ENCODE measurements at regions of chr15 and their contacts with region 1.

Region 1: DNA sequence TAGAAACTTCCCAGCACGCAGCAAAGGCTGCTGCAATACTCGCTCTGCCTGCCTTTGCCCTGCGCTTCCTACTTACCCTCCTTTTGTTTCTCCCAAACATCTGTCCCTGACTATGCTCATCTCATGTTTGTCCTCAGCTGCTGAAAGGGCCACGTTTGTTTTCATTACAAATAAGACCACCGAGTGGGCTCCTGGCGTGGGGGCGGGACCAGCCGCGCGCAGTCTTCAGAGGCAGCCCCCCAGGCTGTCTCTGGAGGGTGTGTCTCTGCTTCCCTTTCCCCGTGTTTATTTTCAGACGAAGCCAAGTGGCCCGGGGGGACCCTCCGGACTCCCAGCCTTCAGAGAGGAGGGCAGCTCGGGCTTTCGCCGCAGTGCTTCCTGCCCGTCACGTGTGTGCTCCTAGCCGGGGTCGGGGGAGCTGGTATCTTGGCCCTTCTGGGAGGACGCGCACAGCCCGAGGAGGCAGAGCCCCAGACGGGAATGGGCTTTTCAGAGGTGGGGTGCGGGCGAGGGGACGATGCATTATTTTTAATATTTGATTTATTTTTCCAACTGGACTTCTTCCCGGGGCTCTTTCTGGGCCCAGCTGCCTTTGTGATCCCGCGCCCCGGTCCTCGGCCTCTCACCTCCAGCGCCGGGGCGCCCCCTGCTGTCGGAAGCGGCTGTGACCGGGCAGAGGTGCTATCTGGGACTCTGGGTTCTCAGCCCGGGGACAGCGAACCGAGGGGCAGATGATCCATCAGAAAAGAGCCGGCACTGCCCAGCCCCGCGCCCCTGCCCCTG is 70.0 kb upstream of the CGNL1 start:
- DNase-seq: peak; percentile 95
- H3K4me3 ChIP-seq: peak overlapping the region; percentile 44 to 54
- H3K27ac ChIP-seq: no peak overlapping the region
- H3K4me1 ChIP-seq: peaks cover 0 to 2% of the 10 kb centered on the region in 2 experiments; a peak in 2 of 4 replicates
- H3K27me3 ChIP-seq: no peaks in the 10 kb centered on the region
- CTCF ChIP-seq: peak; percentile 85
- EP300 ChIP-seq: no peak
- RAD21 ChIP-seq: peak; percentile 83

Region 2: GRCh38 chr15:56496635-56497034 is 809.7 kb before region 1 on chr15:
- CTCF ChIA-PET with region 1: interaction called, 36 read pairs
- POLR2A ChIA-PET with region 1: interaction called, 5 read pairs
- DNase-seq: peak; percentile 56
- H3K4me3 ChIP-seq: no peak overlapping the region
- H3K27ac ChIP-seq: no peak overlapping the region
- H3K4me1 ChIP-seq: no peaks in the 10 kb centered on the region
- H3K27me3 ChIP-seq: no peaks in the 10 kb centered on the region
- CTCF ChIP-seq: peak; percentile 83
- EP300 ChIP-seq: no peak
- RAD21 ChIP-seq: peak; percentile 89

Region 3: DNA sequence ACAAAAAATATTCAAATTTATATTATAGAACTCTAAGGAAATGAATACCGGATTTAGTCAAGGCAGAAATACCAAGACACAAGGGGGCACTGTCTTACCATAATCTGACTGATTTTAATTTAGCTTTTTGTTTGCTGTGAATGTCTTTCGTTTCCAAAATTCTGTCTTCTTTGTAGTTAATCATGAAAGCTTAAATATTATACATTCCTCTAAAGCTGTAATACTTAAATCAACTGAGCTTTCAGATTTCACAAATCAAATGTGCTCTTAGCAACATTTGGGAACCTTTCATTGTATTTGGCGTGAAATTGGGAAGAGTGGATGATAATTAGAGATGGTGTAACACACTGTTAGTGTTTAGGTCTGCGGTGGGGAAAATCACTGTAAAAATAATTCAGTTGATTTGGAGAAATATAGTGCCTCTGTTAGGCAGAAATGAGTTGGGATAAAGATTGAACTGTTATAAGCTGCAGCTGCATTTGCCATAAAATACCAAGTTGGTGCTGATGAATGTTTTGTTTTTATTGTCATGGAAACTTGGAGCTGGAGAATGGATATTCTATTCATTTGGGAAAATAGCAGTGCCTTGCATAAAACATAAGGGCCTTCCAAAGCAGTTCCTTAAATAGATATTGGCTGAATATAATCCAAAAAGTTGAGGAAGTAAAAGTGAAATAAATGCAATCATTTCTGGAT is 159.7 kb before region 1 on chr15:
- CTCF ChIA-PET with region 1: interaction called, 141 read pairs
- POLR2A ChIA-PET with region 1: no interaction called
- DNase-seq: peak; percentile 21
- H3K4me3 ChIP-seq: no peak overlapping the region
- H3K27ac ChIP-seq: peak overlapping the region in 1 of 2 experiments; percentile 41; a peak in 1 of 4 replicates
- H3K4me1 ChIP-seq: peaks cover 3 to 42% of the 10 kb centered on the region in 2 experiments; a peak in 3 of 4 replicates
- H3K27me3 ChIP-seq: no peaks in the 10 kb centered on the region
- CTCF ChIP-seq: peak; percentile 91
- EP300 ChIP-seq: no peak
- RAD21 ChIP-seq: peak; percentile 86

Region 4: GRCh38 chr15:57218826-57219576 is 87.4 kb before region 1 on chr15:
- CTCF ChIA-PET with region 1: interaction called, 25 read pairs
- POLR2A ChIA-PET with region 1: no interaction called
- DNase-seq: peak; percentile 27
- H3K4me3 ChIP-seq: peak overlapping the region; percentile 50 to 59
- H3K27ac ChIP-seq: peak overlapping the region; percentile 89 to 90
- H3K4me1 ChIP-seq: peaks cover 32 to 35% of the 10 kb centered on the region in 2 experiments; a peak in 3 of 4 replicates
- H3K27me3 ChIP-seq: no peaks in the 10 kb centered on the region
- CTCF ChIP-seq: no peak
- EP300 ChIP-seq: peak in 1 of 2 experiments; percentile 26; a peak in 1 of 4 replicates
- RAD21 ChIP-seq: no peak

Region 5: DNA sequence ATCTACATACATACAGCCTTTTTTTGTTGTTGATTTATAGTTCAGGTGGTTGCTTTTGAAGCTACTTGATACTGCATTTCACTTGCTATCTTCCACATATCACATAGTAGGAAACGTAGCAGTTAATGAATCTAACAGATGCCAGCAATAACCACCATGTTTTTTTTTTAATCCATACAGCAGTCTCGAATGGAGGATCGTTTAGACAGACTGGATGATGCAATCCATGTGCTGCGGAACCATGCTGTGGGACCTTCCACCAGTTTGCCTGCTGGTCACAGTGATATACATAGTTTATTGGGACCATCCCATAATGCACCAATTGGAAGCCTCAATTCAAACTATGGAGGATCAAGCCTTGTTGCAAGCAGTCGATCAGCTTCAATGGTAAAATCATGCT is 53.3 kb before region 1 on chr15:
- CTCF ChIA-PET with region 1: interaction called, 12 read pairs
- POLR2A ChIA-PET with region 1: no interaction called
- DNase-seq: no peak
- H3K4me3 ChIP-seq: no peak overlapping the region
- H3K27ac ChIP-seq: no peak overlapping the region
- H3K4me1 ChIP-seq: peaks cover 9% of the 10 kb centered on the region in 2 experiments; a peak in 3 of 4 replicates
- H3K27me3 ChIP-seq: no peaks in the 10 kb centered on the region
- CTCF ChIP-seq: no peak
- EP300 ChIP-seq: no peak
- RAD21 ChIP-seq: no peak

Region 6: DNA sequence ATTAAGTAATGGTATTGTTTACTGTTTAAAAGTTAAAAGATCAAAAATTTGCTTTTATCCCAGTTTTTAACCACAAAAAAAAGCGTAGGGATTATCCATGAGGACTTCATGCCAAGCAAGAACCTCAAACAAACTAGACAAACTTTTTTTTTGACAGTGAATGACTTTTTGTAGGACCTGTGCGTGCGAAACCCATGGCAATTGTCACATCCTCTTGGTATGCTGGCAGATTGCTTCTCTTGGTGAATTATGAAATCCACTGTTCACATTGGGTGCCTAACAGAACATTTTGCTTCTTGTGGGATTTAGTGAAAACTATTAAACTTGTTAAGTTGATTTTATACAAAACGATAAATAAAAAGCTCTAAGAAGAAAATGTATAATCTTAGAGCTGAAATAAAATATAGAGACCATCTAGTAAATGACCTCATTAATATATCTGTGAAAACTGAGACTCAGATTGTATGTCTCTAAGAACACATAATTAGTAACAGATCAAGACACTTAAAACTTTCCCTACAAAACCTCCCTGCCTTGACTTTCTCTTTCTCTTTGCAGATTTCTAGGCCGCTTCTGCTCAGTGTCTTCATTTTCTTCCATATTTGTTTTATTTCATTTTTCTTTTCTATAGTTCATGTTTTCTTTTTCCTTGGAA is 17.3 kb before region 1 on chr15:
- CTCF ChIA-PET with region 1: interaction called, 22 read pairs
- POLR2A ChIA-PET with region 1: no interaction called
- DNase-seq: no peak
- H3K4me3 ChIP-seq: no peak overlapping the region
- H3K27ac ChIP-seq: no peak overlapping the region
- H3K4me1 ChIP-seq: no peaks in the 10 kb centered on the region
- H3K27me3 ChIP-seq: no peaks in the 10 kb centered on the region
- CTCF ChIP-seq: no peak
- EP300 ChIP-seq: no peak
- RAD21 ChIP-seq: no peak

Region 7: DNA sequence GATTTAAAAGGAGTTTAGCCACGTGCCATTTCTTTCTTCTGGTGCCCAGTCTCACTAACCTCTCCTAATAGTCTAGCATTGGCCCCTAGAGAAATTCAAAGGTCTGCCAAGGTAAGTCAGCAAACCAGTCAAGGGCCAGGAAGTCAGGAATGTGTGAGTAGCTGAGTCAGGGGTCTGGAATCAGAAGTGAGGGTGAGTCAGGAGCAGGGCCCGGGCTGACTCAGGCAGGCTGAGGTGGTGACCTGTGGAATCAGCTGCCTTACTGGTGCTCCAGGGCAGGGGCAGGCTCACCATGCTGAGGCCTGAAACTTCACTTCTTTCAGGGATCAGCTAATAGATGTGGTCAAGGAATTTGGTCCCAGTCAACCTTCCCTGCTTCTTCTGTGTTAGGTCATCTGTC is 179.5 kb after region 1 on chr15:
- CTCF ChIA-PET with region 1: no interaction called
- POLR2A ChIA-PET with region 1: no interaction called
- DNase-seq: no peak
- H3K4me3 ChIP-seq: no peak overlapping the region
- H3K27ac ChIP-seq: peak overlapping the region in 1 of 2 experiments; percentile 54; a peak in 2 of 4 replicates
- H3K4me1 ChIP-seq: no peaks in the 10 kb centered on the region; a peak in 1 of 4 replicates
- H3K27me3 ChIP-seq: no peaks in the 10 kb centered on the region
- CTCF ChIP-seq: no peak
- EP300 ChIP-seq: peak in 1 of 2 experiments; percentile 75; a peak in 1 of 4 replicates
- RAD21 ChIP-seq: no peak